ENCODE measurements at regions of chr15 and their contacts with region 1.

Region 1: DNA sequence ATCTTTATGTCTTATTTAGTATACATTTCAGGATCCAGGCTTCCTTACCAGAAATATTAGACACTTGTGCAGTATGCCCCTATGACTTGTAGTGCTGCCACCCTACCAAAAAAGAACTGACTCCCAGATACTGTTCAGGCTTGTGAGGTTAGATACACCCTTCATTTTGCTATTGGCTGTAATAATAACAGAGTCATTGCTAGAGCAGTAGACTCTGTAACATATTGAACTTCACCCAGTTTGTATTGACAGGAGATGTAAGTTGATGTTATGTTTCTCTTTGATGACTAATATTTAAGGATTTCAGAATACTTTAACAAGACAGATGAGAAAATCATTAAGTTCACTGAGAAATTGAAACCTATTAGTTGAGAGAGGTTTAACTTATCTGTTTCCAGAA is 32.9 kb downstream of the RNF111 start:
- DNase-seq: no peak
- ATAC-seq: peak; percentile 51
- H3K4me3 ChIP-seq: no peak overlapping the region
- H3K27ac ChIP-seq: no peak overlapping the region
- H3K4me1 ChIP-seq: peaks cover 5% of the 10 kb centered on the region
- H3K27me3 ChIP-seq: no peaks in the 10 kb centered on the region
- CTCF ChIP-seq: no peak
- EP300 ChIP-seq: no peak
- POLR2A ChIP-seq: no peak
- RAD21 ChIP-seq: no peak

Region 2: DNA sequence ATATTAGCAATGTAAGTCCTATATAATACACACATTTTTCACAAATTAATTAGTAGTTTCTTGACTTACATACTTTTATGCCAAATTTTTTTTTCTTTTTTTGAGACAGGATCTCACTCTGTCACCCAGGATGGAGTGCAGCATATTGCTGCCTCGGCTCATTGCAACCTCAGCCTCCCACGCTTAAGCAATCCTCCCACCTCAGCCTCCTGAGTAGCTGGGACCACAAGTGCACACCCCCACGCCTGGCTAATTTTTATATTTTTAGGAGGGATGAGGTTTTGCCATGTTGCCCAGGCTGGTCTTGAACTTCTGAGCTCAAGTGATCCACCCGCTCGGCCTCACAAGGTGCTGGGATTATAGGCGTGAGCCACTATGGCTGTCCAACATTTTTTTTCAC is 21.7 kb after region 1 on chr15:
- CTCF ChIA-PET with region 1: interaction called, 4 read pairs
- POLR2A ChIA-PET with region 1: interaction called, 4 read pairs
- RAD21 ChIA-PET with region 1: interaction called, 3 read pairs
- SMC1A ChIA-PET with region 1: interaction called, 5 read pairs
- in situ Hi-C with region 1: no loop called
- intact Hi-C with region 1: loop called (anchors 2 kb)
- DNase-seq: no peak
- ATAC-seq: no peak
- H3K4me3 ChIP-seq: no peak overlapping the region
- H3K27ac ChIP-seq: no peak overlapping the region
- H3K4me1 ChIP-seq: no peaks in the 10 kb centered on the region
- H3K27me3 ChIP-seq: no peaks in the 10 kb centered on the region
- CTCF ChIP-seq: no peak
- EP300 ChIP-seq: no peak
- POLR2A ChIP-seq: no peak
- RAD21 ChIP-seq: no peak

Region 3: DNA sequence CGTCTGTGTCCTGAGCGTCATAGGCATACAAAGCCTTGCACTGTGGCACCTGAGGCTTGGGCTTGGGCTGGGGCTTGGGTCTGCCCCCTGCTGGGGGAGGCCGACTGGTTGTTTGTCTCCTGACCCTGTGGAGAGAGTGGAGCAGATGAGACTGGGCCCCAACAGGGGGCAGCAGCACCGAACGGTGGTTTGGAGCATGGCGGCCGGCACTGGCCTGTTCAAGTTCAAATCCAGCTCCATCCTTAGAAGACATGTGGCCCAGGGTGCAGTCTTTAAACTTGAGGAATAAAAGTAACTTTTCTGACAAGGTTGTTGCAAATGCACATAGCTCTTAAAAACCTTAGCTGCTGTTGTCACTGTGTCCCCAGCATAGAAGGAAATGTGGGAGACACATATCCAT is 117.9 kb after region 1 on chr15:
- CTCF ChIA-PET with region 1: no interaction called
- POLR2A ChIA-PET with region 1: interaction called, 10 read pairs
- RAD21 ChIA-PET with region 1: no interaction called
- SMC1A ChIA-PET with region 1: no interaction called
- in situ Hi-C with region 1: no loop called
- intact Hi-C with region 1: no loop called
- DNase-seq: no peak
- ATAC-seq: peak; percentile 96
- H3K4me3 ChIP-seq: no peak overlapping the region
- H3K27ac ChIP-seq: no peak overlapping the region
- H3K4me1 ChIP-seq: peaks cover 6% of the 10 kb centered on the region
- H3K27me3 ChIP-seq: no peaks in the 10 kb centered on the region
- CTCF ChIP-seq: peak; percentile 77 to 85 (median 83)
- EP300 ChIP-seq: no peak
- POLR2A ChIP-seq: 0 out of 2 replicates have a peak, but pooled peaks have one; percentile 0
- RAD21 ChIP-seq: peak; percentile 44; the same call in 1 of the 2 replicates